Natural killer cell (primary cell): ENCODE measurements at regions of chr13 and their contacts with region 1.

Region 1: DNA sequence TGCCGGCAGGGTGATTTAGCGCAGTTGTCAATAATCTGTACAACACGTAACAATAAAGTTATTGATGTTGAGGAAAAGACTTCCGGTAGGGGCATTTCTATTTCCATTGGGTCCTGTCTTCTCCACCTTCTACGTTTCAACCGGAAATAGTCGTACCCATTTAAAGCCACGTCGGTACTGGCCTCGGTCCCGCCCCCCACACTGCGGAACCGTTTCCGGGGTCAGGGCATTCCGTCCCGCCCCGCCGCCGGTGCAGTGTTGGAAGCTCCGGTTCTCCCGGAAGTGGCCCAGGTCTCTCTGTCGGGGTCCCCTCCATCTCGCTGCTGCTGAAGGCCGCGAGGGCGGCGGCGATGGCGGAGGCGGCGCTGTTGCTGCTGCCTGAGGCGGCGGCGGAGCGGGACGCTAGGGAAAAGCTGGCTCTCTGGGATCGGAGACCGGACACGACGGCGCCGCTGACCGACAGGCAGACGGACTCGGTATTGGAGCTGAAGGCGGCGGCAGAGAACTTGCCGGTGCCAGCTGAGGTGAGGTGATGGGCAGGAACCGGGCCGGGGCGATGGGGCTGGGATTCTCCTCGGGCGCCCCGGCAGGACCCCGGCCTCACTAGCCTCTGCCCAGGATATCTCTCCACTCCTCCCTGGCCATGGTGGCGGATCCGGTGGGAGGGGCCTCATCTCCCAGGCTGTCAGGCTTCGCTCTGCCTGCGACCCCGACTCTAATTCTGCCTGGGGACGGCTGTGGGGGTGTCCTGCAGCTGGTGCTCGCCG is at the start of gene COG3:
- DNase-seq: peak; percentile 91 to 97
- ATAC-seq: peak; percentile 95 to 98 (median 95)
- H3K4me3 ChIP-seq: peak within 1 kb of the TSS; percentile 86
- H3K4me3 Mint-ChIP-seq: peak within 1 kb of the TSS; percentile 96
- H3K27ac ChIP-seq: peak within 1 kb of the TSS; percentile 87
- H3K27ac Mint-ChIP-seq: peak within 1 kb of the TSS; percentile 94 to 97
- H3K4me1 ChIP-seq: peaks cover 21% of the 10 kb centered on the region
- H3K4me1 Mint-ChIP-seq: peaks cover 42 to 52% of the 10 kb centered on the region in 2 donors
- H3K27me3 ChIP-seq: no peaks in the 10 kb centered on the region
- H3K27me3 Mint-ChIP-seq: peaks cover 7 to 11% of the 10 kb centered on the region in 2 donors
- CTCF ChIP-seq: peak; percentile 41
- total RNA-seq, gene COG3: 48.8 to 58.1 (median 55.6) TPM

Region 2: GRCh38 chr13:45119991-45120864 is 344.6 kb before region 1 on chr13 and contains the start of gene GTF2F2:
- intact Hi-C with region 1: loop called (anchors 5 kb)
- DNase-seq: peak; percentile 86 to 95
- ATAC-seq: peak; percentile 74 to 83 (median 76)
- H3K4me3 ChIP-seq: peak within 1 kb of the TSS; percentile 90
- H3K4me3 Mint-ChIP-seq: no peak within 1 kb of the TSS
- H3K27ac ChIP-seq: peak within 1 kb of the TSS; percentile 92
- H3K27ac Mint-ChIP-seq: no peak within 1 kb of the TSS
- H3K4me1 ChIP-seq: peaks cover 12% of the 10 kb centered on the region
- H3K4me1 Mint-ChIP-seq: peaks cover 8% of the 10 kb centered on the region in 2 donors
- H3K27me3 ChIP-seq: no peaks in the 10 kb centered on the region
- H3K27me3 Mint-ChIP-seq: no peaks in the 10 kb centered on the region
- CTCF ChIP-seq: no peak
- total RNA-seq, gene GTF2F2: 13.6 to 16.4 (median 15.7) TPM

Region 3: DNA sequence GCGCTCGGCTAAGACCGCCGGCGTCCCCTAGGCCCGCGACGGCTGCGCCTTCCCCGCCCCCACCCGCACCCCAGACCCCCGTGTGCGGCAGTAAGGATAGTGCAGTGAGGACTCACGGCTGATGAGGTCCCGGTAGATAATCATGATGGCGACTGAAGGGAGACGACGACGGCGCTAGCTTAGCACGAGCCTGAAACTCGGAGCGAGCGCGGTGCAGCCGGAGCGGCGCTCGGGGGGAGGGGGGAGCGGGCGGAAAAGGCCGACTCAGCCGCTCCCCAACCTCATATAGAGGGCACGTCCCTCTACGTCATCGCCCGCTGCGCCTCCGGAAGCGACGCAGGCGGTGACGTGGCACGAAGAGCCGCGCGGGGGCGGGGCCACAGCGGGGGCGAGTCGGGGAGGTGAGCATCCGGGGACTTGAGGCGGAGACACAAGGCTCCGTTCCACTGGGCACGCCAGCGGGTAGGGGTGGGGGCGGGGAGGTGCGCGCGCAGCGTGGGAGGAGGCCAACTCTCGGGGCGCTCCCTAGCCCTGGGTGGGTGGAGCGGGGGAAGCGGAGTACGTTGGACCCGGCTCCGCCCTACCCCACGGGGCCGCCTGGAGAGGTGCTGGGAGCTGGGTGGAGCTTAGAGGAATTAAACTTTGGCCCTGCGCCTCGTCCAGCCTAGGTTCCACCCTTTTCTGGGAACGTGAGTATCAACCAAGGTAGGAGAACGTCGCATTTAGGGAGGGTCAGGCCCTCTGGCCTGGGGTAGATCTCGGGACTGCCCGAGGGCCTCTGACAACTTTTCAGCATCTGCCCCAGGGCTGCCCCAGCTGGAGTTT is 123.7 kb before region 1 on chr13 and contains the start of gene TPT1:
- intact Hi-C with region 1: loop called (anchors 1 kb)
- DNase-seq: peak; percentile 99 to 100
- ATAC-seq: peak; percentile 81 to 93 (median 84)
- H3K4me3 ChIP-seq: peak within 1 kb of the TSS; percentile 82
- H3K4me3 Mint-ChIP-seq: peak within 1 kb of the TSS; percentile 94
- H3K27ac ChIP-seq: peak within 1 kb of the TSS; percentile 95
- H3K27ac Mint-ChIP-seq: peak within 1 kb of the TSS; percentile 72 to 98
- H3K4me1 ChIP-seq: peaks cover 18% of the 10 kb centered on the region
- H3K4me1 Mint-ChIP-seq: peaks cover 47 to 56% of the 10 kb centered on the region in 2 donors
- H3K27me3 ChIP-seq: no peaks in the 10 kb centered on the region
- H3K27me3 Mint-ChIP-seq: no peaks in the 10 kb centered on the region
- CTCF ChIP-seq: no peak
- total RNA-seq, gene TPT1: 2,606 to 3,166 (median 3,085) TPM

Region 4: DNA sequence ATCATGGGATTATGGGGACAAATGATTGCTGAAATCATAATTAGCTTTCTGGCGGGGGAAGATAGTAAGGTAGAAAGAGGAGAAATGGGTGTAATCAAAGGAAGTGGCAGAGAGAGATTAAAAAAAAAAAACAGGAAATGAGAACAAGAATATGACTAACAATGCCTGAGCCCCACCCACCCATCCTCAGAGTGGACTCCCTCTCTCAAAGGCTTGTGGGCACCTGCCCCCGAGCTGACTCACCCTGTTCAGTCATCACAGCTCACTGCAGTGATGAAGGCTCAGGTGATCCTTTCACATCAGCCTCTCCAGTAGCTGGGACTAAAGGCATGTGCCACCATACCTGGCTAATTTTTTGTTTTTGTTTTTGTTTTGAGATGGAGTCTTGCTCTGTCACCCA is 97.5 kb before region 1 on chr13:
- intact Hi-C with region 1: loop called (anchors 1 kb)
- DNase-seq: peak; percentile 61 to 92
- ATAC-seq: peak; percentile 96 to 97 (median 96)
- H3K4me3 ChIP-seq: no peak overlapping the region
- H3K4me3 Mint-ChIP-seq: peak overlapping the region; percentile 75
- H3K27ac ChIP-seq: peak overlapping the region; percentile 36
- H3K27ac Mint-ChIP-seq: peak overlapping the region; percentile 60 to 73
- H3K4me1 ChIP-seq: peaks cover 34% of the 10 kb centered on the region
- H3K4me1 Mint-ChIP-seq: peaks cover 34 to 50% of the 10 kb centered on the region in 2 donors
- H3K27me3 ChIP-seq: no peaks in the 10 kb centered on the region
- H3K27me3 Mint-ChIP-seq: no peaks in the 10 kb centered on the region
- CTCF ChIP-seq: no peak

Region 5: DNA sequence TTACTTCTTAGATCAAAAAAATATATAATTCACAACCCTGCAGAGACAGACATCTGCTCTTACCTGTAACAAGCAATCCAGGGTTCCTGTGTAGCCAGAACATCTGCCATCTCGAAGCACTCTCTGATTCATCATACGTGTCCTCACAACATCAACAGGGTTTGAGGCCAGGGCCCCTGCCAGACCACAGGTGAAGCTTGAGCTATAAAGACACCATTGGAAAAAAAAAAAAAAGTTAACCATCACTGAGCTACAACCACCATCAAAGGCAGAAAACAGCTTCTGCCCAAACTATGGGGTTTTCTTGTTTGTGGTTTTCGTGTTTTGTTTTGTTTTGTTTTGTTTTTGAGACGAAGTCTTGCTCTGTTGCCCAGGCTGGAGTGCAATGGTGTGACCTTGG is 66.0 kb before region 1 on chr13:
- intact Hi-C with region 1: no loop called
- DNase-seq: peak in 1 of 2 donors; percentile 69
- ATAC-seq: peak; percentile 71 to 81 (median 71)
- H3K4me3 ChIP-seq: no peak overlapping the region
- H3K4me3 Mint-ChIP-seq: no peak overlapping the region
- H3K27ac ChIP-seq: peak overlapping the region; percentile 43
- H3K27ac Mint-ChIP-seq: peak overlapping the region; percentile 79 to 85
- H3K4me1 ChIP-seq: peaks cover 24% of the 10 kb centered on the region
- H3K4me1 Mint-ChIP-seq: peaks cover 44 to 50% of the 10 kb centered on the region in 2 donors
- H3K27me3 ChIP-seq: no peaks in the 10 kb centered on the region
- H3K27me3 Mint-ChIP-seq: no peaks in the 10 kb centered on the region
- CTCF ChIP-seq: no peak